Natural killer cell (primary cell): ENCODE measurements at regions of chr12 and their contacts with region 1.

Region 1: GRCh38 chr12:10562306-10562933 is 51.0 kb downstream of the MAGOHB start:
- DNase-seq: peak in 1 of 2 donors; percentile 79
- ATAC-seq: peak; percentile 37 to 53 (median 47)
- H3K4me3 ChIP-seq: no peak overlapping the region
- H3K4me3 Mint-ChIP-seq: no peak overlapping the region
- H3K27ac ChIP-seq: no peak overlapping the region
- H3K27ac Mint-ChIP-seq: peak overlapping the region in 1 of 2 donors; percentile 52
- H3K4me1 ChIP-seq: peaks cover 22% of the 10 kb centered on the region
- H3K4me1 Mint-ChIP-seq: peaks cover 38 to 41% of the 10 kb centered on the region in 2 donors
- H3K27me3 ChIP-seq: no peaks in the 10 kb centered on the region
- H3K27me3 Mint-ChIP-seq: no peaks in the 10 kb centered on the region
- CTCF ChIP-seq: peak; percentile 82

Region 2: DNA sequence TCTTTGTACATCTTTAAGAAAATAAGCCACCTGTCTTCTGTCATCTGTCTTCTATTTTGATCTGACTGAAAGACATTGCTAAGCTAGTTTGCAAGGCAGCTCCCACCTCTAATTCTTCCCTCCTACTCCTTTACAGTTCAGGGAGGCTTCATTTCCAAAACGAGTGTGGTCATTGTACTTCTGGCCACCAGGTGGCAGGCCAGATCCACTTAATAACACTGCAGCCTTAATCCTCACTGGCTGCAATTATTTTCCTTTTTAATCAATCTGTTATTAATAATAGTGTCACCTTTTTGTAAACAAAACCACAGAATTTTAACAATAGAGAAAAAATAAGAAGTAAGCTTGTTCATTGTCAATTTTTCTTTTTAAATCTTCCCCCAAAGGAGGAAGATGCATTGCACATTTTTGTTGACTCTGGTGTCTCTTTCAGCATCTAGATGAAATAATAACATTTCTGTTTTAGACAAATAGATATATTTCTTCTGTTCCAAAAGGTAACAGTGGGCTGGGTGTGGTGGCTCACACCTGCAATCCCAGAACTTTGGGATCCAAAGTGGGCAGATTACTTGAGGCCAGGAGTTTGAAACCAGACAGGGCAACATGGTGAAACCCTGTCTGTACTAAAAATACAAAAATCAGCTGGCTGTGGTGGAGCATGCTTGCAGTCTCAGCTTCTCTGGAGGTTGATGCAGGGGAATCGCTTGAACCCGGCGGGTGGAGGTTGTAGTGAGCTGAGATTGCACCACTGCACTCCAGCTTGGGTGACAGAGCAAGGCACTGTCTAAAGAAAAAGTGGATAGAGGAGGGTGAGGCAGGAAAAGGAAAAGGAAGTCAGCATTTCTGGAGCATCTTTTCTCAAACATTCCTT is 326.4 kb before region 1 on chr12:
- intact Hi-C with region 1: loop called (anchors 1 kb)
- DNase-seq: peak; percentile 53 to 83
- ATAC-seq: peak; percentile 76 to 84 (median 77)
- H3K4me3 ChIP-seq: no peak overlapping the region
- H3K4me3 Mint-ChIP-seq: peak overlapping the region; percentile 56
- H3K27ac ChIP-seq: peak overlapping the region; percentile 51
- H3K27ac Mint-ChIP-seq: peak overlapping the region; percentile 85 to 89
- H3K4me1 ChIP-seq: peaks cover 26% of the 10 kb centered on the region
- H3K4me1 Mint-ChIP-seq: peaks cover 57% of the 10 kb centered on the region in 2 donors
- H3K27me3 ChIP-seq: no peaks in the 10 kb centered on the region
- H3K27me3 Mint-ChIP-seq: no peaks in the 10 kb centered on the region
- CTCF ChIP-seq: peak; percentile 96

Region 3: DNA sequence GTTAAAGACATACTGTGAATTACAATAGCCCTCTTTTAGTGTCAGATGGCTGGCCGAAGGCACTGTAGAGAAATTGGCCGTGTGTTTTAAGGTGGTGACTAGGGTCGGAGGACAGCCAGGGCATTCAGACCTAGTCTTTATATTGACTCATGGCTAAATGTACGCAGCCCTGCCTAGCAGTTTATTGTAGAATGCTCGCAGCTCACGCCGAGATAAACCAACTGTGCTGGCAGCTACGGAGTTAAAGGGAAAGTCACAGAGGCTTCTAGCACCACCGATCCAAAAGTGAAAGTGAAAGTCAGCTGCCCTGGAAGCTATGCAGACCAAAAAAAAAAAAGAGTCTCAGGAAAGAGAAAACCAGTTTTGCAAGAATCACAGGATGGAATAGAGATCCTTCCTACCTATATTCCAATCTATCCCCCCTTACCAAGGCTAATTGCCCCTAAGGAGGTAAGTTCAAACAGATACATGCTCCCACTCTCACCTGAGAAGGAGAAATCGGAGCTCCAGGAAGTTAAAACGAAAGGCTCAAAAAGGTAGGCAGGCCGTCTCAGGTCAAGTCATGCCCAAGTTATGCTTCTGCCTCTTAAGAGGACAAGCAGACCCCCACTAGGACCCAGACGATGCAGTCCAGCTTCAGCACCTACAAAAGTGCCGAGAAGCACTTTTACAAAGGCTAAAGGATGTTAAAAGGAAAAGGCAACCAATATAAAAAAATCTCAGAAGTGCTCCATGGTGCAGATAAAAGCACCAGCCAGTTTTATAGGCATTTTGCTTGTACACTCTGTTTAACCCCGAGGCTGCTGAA is 197.4 kb before region 1 on chr12:
- intact Hi-C with region 1: loop called (anchors 5 kb)
- DNase-seq: peak; percentile 51 to 90
- ATAC-seq: peak; percentile 74 to 83 (median 80)
- H3K4me3 ChIP-seq: peak overlapping the region; percentile 70
- H3K4me3 Mint-ChIP-seq: no peak overlapping the region
- H3K27ac ChIP-seq: peak overlapping the region; percentile 83
- H3K27ac Mint-ChIP-seq: no peak overlapping the region
- H3K4me1 ChIP-seq: peaks cover 63% of the 10 kb centered on the region
- H3K4me1 Mint-ChIP-seq: peaks cover 23 to 40% of the 10 kb centered on the region in 2 donors
- H3K27me3 ChIP-seq: no peaks in the 10 kb centered on the region
- H3K27me3 Mint-ChIP-seq: no peaks in the 10 kb centered on the region
- CTCF ChIP-seq: no peak

Region 4: DNA sequence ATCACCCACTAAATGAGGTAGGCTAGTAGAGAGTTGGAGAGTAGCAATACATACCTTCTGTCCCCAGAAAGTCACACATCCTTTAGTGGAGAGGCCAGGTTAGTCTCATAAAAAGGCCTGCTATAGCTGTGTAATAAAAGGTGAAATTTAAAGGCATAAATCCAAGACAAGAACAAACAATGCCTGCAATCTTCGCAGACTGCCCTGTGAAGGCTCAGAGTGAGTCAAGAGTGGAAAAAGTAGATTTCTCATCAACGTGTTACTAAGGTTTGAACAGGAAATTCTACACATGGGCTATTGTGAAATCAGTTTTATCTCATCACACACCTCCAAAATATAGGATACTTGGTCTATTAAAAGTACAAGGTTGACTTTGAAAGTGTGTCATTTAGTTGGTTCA is 109.3 kb before region 1 on chr12 and contains the start of gene KLRC1:
- intact Hi-C with region 1: loop called (anchors 5 kb)
- DNase-seq: peak in 1 of 2 donors; percentile 26
- ATAC-seq: peak; percentile 59 to 75 (median 75)
- H3K4me3 ChIP-seq: peak within 1 kb of the TSS; percentile 55
- H3K4me3 Mint-ChIP-seq: peak within 1 kb of the TSS; percentile 67
- H3K27ac ChIP-seq: peak within 1 kb of the TSS; percentile 39
- H3K27ac Mint-ChIP-seq: peak within 1 kb of the TSS; percentile 52 to 90
- H3K4me1 ChIP-seq: peaks cover 18% of the 10 kb centered on the region
- H3K4me1 Mint-ChIP-seq: peaks cover 16 to 45% of the 10 kb centered on the region in 2 donors
- H3K27me3 ChIP-seq: no peaks in the 10 kb centered on the region
- H3K27me3 Mint-ChIP-seq: no peaks in the 10 kb centered on the region
- CTCF ChIP-seq: no peak
- total RNA-seq, gene KLRC1: 30.0 to 180 (median 83.1) TPM